Right ventricle myocardium inferior (tissue), 1 donor: ENCODE measurements at regions of chr10 and their contacts with region 1.

Region 1: GRCh38 chr10:80444646-80445319 is 9.3 kb upstream of the TSPAN14 start:
- DNase-seq: peak; percentile 83
- ATAC-seq: peak; percentile 92

Region 2: GRCh38 chr10:80382989-80383388 is 61.8 kb before region 1 on chr10:
- intact Hi-C with region 1: loop called (anchors 2 kb)
- DNase-seq: no peak
- ATAC-seq: no peak

Region 3: DNA sequence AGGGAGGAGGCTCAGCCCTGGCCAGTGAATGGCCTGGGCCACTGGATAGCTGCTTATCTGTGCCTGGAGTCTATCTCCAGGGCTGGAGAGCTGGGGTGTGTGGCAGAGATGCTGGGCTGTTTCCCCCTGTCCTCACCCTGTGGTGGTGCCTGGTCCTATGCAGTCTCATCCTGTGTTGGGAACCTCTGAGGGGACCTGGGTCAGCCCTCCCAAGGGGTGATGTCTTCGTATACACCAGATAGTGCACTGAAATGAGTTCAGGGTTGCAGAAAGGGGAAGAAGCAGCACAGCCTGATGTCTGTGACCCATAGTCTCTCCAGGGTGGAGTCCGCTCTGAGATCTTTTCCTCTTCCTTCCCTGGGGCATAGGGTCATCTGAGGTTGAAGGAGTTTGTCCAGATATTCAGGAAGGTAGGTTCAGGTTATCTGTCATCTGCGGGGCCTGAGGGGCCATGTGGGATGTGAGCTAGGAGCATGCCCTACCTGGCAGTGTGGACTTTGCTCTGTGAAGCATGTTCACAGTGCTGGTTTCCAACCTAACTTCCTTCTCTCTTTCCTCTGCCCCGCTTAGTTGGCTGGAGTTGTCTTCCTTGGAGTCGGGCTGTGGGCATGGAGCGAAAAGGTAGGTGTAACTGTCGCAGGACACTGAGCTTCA is 59.5 kb after region 1 on chr10:
- intact Hi-C with region 1: loop called (anchors 1 kb)
- DNase-seq: peak; percentile 42
- ATAC-seq: no peak

Region 4: GRCh38 chr10:80580638-80581468 is 136.1 kb after region 1 on chr10:
- intact Hi-C with region 1: loop called (anchors 5 kb)
- DNase-seq: no peak
- ATAC-seq: no peak

Region 5: DNA sequence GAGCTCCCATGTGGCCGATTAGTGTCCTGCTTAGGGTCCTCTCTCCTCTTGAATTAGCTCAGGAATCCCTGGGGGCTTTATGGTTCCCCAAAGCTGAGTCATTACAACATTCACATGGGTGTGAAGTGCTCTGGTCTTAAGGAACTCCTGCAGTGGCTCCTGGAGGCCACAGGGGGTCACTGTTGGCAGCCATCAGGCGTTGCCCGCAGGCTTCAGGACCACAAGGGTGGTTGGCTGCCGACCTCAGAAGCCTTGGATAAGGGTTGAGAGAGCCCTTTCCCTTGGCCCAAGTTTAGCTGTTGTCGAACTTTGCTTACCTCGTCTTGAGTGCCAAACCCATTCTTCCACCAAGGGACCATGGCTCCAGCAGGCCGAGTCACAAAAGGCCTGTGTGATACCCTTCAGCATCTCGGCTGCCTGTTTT is 154.7 kb after region 1 on chr10:
- intact Hi-C with region 1: loop called (anchors 5 kb)
- DNase-seq: peak; percentile 81
- ATAC-seq: peak; percentile 64

Region 6: GRCh38 chr10:80662577-80663261 is 217.9 kb after region 1 on chr10:
- intact Hi-C with region 1: loop called (anchors 10 kb)
- DNase-seq: peak; percentile 92
- ATAC-seq: peak; percentile 86